IMR-90 (cell line): ENCODE measurements at regions of chr3 and their contacts with region 1.

Region 1: GRCh38 chr3:196942226-196942914 is at the start of gene NCBP2:
- DNase-seq: peak; percentile 98
- ATAC-seq: peak; percentile 94
- H3K4me3 ChIP-seq: peak within 1 kb of the TSS; percentile 78
- H3K27ac ChIP-seq: peak within 1 kb of the TSS; percentile 86
- H3K4me1 ChIP-seq: peaks cover 5% of the 10 kb centered on the region
- H3K27me3 ChIP-seq: no peaks in the 10 kb centered on the region
- CTCF ChIP-seq: peak; percentile 72
- POLR2A ChIP-seq: peak; percentile 90
- RAD21 ChIP-seq: peak; percentile 29; the same call in 1 of the 2 replicates
- total RNA-seq, gene NCBP2: 42.8 and 71.4 TPM in 2 replicates

Region 2: DNA sequence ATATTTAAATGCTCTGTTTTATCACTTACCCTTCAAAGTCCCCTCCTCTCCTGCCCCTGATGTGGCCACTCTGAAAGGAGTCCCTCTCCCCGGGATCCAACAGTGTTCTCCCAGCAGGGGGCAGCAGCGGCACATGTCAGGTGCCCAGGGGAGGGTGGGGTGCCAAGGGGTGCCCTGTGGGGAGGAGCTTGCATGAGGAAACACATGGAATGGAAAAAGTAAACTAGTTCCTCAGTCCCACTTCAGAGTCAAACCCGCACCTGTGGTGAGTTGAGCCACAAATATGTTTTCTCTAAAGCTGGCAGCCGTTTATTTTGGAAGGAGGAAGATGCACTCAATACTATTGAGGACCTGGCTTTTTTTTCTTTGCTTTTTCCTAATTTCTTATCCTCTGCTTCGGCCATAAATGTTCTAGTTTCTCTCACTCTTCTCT is 333.0 kb before region 1 on chr3:
- CTCF ChIA-PET with region 1: no interaction called
- POLR2A ChIA-PET with region 1: no interaction called
- dilution Hi-C with region 1: no loop called
- in situ Hi-C with region 1: no loop called
- intact Hi-C with region 1: loop called (anchors 10 kb)
- DNase-seq: peak; percentile 63
- ATAC-seq: peak; percentile 98
- H3K4me3 ChIP-seq: no peak overlapping the region
- H3K27ac ChIP-seq: no peak overlapping the region
- H3K4me1 ChIP-seq: no peaks in the 10 kb centered on the region
- H3K27me3 ChIP-seq: peaks cover 7% of the 10 kb centered on the region
- CTCF ChIP-seq: peak; percentile 83
- POLR2A ChIP-seq: 0 out of 2 replicates have a peak, but pooled peaks have one; percentile 33
- RAD21 ChIP-seq: peak; percentile 92

Region 3: GRCh38 chr3:196739671-196740480 is 202.5 kb before region 1 on chr3 and contains the start of gene PAK2:
- CTCF ChIA-PET with region 1: no interaction called
- POLR2A ChIA-PET with region 1: no interaction called
- dilution Hi-C with region 1: no loop called
- in situ Hi-C with region 1: no loop called
- intact Hi-C with region 1: loop called (anchors 5 kb)
- DNase-seq: peak; percentile 79
- ATAC-seq: peak; percentile 96
- H3K4me3 ChIP-seq: peak within 1 kb of the TSS; percentile 86
- H3K27ac ChIP-seq: peak within 1 kb of the TSS; percentile 91
- H3K4me1 ChIP-seq: peaks cover 1% of the 10 kb centered on the region; the same call in 1 of the 2 replicates
- H3K27me3 ChIP-seq: no peaks in the 10 kb centered on the region
- CTCF ChIP-seq: no peak
- POLR2A ChIP-seq: peak; percentile 73
- RAD21 ChIP-seq: no peak
- total RNA-seq, gene PAK2: 33.9 and 36.0 TPM in 2 replicates

Region 4: DNA sequence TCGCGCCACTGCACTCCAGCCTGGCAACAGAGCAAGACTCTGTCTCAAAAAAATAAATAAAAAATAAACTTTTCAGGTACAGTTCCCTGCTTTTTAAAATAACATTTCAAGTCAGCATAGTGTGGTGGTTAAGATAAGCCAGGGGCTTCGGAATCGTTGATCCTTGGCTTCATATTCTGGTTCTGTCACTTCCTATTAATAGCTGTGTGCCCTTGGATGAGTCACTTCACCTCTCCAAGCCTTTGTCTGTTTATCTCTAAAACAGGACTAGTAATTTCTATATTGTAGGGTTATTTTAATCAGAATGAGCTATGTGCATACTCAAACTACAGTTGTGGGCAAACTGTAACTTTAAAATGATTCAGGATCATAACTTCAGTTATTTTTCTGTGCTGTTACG is 128.5 kb before region 1 on chr3:
- CTCF ChIA-PET with region 1: no interaction called
- POLR2A ChIA-PET with region 1: no interaction called
- dilution Hi-C with region 1: no loop called
- in situ Hi-C with region 1: no loop called
- intact Hi-C with region 1: no loop called
- DNase-seq: peak; percentile 70
- ATAC-seq: peak; percentile 62
- H3K4me3 ChIP-seq: no peak overlapping the region
- H3K27ac ChIP-seq: no peak overlapping the region
- H3K4me1 ChIP-seq: no peaks in the 10 kb centered on the region
- H3K27me3 ChIP-seq: no peaks in the 10 kb centered on the region
- CTCF ChIP-seq: no peak
- POLR2A ChIP-seq: no peak
- RAD21 ChIP-seq: no peak

Region 5: GRCh38 chr3:196837819-196838420 is 104.5 kb before region 1 on chr3:
- CTCF ChIA-PET with region 1: interaction called, 3 read pairs
- POLR2A ChIA-PET with region 1: no interaction called
- dilution Hi-C with region 1: no loop called
- in situ Hi-C with region 1: no loop called
- intact Hi-C with region 1: loop called (anchors 1 kb)
- DNase-seq: peak; percentile 54
- ATAC-seq: peak; percentile 88
- H3K4me3 ChIP-seq: no peak overlapping the region
- H3K27ac ChIP-seq: no peak overlapping the region
- H3K4me1 ChIP-seq: no peaks in the 10 kb centered on the region
- H3K27me3 ChIP-seq: no peaks in the 10 kb centered on the region
- CTCF ChIP-seq: peak; percentile 70
- POLR2A ChIP-seq: no peak
- RAD21 ChIP-seq: peak; percentile 75

Region 6: DNA sequence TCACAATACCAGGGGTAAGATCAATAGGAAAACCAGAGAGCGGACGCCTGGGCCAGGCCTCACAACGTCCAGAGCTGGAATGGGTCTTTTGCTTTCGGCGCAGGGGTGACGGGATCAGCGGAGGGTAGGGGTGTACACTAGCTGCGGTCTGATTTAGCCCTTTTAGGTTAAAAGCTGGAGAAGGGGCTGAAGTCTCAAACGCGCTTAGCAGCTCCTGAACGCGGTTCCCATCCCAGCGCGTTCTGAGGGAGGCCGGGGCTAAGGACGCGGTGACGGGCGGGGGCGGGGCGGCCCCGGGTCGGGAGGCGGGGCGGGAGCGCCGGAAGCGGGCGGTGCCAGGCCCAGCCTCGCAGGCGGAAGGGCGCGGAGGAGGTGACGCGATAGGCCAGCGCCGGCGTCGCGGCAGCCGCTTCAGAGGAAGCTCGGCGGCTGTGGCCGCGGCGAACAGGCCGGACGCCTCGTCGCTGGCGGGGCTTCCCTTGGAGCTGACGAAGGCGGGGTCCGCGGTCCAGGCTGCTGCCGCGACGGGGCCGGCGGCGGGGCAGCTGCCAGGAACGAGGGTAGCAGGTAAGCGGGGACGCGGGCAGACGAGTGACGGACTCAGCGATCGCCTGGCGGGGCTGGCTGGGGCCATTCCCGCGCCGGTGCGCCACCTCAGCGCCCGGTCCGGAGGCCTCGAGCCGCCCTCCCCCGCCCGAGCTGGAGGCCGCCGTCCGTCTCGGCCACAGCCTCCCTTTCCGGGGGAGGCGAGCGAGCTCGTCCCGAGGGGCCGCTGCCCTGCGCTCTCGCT is 74.7 kb before region 1 on chr3 and contains the start of gene SENP5:
- CTCF ChIA-PET with region 1: interaction called, 3 read pairs
- POLR2A ChIA-PET with region 1: no interaction called
- dilution Hi-C with region 1: no loop called
- in situ Hi-C with region 1: no loop called
- intact Hi-C with region 1: loop called (anchors 5 kb)
- DNase-seq: peak; percentile 86
- ATAC-seq: peak; percentile 96
- H3K4me3 ChIP-seq: peak within 1 kb of the TSS; percentile 92
- H3K27ac ChIP-seq: peak within 1 kb of the TSS; percentile 96
- H3K4me1 ChIP-seq: peaks cover 4% of the 10 kb centered on the region
- H3K27me3 ChIP-seq: no peaks in the 10 kb centered on the region
- CTCF ChIP-seq: no peak
- POLR2A ChIP-seq: peak; percentile 97
- RAD21 ChIP-seq: no peak
- total RNA-seq, gene SENP5: 44.4 and 45.5 TPM in 2 replicates